Endothelial cell of umbilical vein (primary cell): ENCODE measurements at regions of chr10 and their contacts with region 1.

Region 1: DNA sequence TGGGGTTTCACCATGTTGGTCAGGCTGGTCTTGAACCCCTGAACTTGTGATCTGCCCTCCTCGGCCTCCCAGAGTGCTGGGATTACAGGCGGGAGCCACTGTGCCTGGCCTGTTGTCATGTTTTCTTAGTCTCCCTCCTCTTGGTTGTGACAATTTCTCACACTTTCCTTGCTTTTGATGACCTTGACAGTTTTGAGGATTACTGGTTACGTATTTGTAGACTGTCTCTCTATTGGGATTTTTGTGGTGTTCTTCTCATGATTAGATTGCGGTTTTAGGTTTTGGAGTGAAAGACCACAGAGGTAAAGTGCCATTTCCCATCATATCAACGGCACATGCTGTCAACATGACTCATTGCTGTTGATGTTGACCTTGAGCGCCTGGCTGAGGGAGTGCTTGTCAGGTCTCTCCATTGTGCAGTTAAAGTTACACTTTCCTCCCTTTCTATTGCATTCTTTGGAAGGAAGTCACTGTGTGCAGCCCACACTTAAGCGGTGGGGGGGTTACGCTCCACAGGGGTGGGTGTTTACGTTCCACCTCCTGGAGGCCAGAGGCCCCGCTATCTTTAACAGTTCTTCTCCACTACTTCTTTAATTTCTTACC is 10.8 kb downstream of the NEURL1 start:
- DNase-seq: peak; percentile 94
- H3K4me3 ChIP-seq: no peak overlapping the region
- H3K27ac ChIP-seq: peak overlapping the region; percentile 56
- H3K4me1 ChIP-seq: peaks cover 10% of the 10 kb centered on the region
- H3K27me3 ChIP-seq: peaks cover 2 to 17% of the 10 kb centered on the region in 2 experiments
- CTCF ChIP-seq: no peak
- POLR2A ChIP-seq: no peak

Region 2: DNA sequence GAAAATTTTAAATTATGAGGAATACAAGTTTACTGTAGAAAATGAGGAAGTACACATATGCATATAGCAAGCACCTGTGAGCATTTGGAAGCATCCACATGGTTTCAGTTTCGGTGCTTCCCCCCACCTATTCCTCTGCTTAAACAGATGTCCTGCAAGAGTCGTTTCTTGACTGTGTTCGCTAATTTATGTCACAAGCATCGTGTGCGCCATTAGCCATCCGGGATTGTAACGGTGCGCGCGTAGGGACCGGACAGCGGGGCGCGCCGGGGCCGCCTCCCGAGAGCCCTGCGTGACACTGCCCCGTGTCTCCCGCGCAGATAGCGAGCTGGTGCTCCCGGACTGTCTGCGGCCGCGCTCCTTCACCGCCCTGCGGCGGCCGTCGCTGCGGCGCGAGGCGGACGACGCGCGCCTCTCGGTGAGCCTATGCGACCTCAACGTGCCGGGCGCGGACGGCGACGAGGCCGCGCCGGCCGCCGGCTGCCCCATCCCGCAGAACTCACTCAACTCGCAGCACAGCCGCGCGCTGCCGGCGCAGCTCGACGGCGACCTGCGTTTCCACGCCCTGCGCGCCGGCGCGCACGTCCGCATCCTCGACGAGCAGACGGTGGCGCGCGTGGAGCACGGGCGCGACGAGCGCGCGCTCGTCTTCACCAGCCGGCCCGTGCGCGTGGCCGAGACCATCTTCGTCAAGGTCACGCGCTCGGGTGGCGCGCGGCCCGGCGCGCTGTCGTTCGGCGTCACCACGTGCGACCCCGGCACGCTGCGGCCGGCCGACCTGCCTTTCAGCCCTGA is 80.1 kb after region 1 on chr10:
- CTCF ChIA-PET with region 1: no interaction called
- POLR2A ChIA-PET with region 1: no interaction called
- dilution Hi-C with region 1: no loop called
- intact Hi-C with region 1: loop called (anchors 5 kb)
- DNase-seq: no peak
- H3K4me3 ChIP-seq: peak overlapping the region in 2 of 3 experiments; percentile 15 to 18
- H3K27ac ChIP-seq: no peak overlapping the region
- H3K4me1 ChIP-seq: no peaks in the 10 kb centered on the region
- H3K27me3 ChIP-seq: peaks cover 11 to 26% of the 10 kb centered on the region in 2 experiments
- CTCF ChIP-seq: no peak
- POLR2A ChIP-seq: no peak

Region 3: DNA sequence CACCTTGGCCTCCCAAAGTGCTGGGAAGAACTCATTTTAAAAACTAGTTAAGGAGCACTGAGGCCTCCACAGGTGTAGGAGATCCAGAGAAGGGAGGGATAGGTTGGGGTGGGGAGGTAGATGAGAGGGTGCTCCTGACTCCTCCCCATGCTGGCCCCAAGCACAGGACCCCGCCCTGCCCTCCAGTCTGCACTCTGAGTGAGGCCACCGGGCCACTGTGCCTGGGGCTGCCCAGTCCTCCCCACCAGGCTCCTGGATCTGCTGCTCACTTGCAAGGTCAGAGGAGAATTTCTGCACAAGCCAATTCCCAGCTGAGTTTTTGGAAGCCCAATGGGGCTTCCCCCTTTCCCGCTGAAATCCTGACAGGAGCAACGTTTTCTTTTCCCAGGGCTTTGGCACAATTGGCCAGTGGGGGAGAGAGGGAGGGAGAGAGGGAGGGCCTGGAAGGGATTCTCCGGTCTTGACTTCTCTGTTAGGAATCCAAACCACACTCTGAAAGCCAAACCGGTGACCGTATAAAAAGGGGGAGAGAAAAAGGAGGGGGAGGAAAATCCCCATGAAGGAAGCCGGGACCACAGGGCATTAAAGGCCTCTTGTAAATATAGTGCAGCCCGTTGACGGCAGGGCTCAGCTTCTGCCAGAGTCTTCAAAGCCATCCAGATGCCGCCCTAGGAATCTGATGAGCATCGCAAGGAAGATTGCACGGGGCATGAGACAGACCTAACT is 234.9 kb after region 1 on chr10:
- CTCF ChIA-PET with region 1: no interaction called
- POLR2A ChIA-PET with region 1: no interaction called
- dilution Hi-C with region 1: no loop called
- intact Hi-C with region 1: no loop called
- DNase-seq: no peak
- H3K4me3 ChIP-seq: no peak overlapping the region
- H3K27ac ChIP-seq: no peak overlapping the region
- H3K4me1 ChIP-seq: no peaks in the 10 kb centered on the region
- H3K27me3 ChIP-seq: no peaks in the 10 kb centered on the region
- CTCF ChIP-seq: no peak
- POLR2A ChIP-seq: no peak